Pancreas (tissue), 10 donors: ENCODE measurements at regions of chr7 and their contacts with region 1.

Region 1: GRCh38 chr7:106283831-106284713 is 711 bp downstream of the NAMPT start:
- DNase-seq: peak; percentile 49 to 82 (median 69)
- ATAC-seq: peak; percentile 6 to 42 (median 12)
- H3K4me3 ChIP-seq: peak overlapping the region; percentile 48 to 83 (median 57)
- H3K27ac ChIP-seq: peak overlapping the region; percentile 82 to 98 (median 92)
- H3K4me1 ChIP-seq: peaks cover 0 to 20% (median 8%) of the 10 kb centered on the region in 3 donors
- H3K27me3 ChIP-seq: no peaks in the 10 kb centered on the region
- CTCF ChIP-seq: no peak

Region 2: GRCh38 chr7:105759670-105760550 is 524.2 kb before region 1 on chr7:
- intact Hi-C with region 1: no loop called
- DNase-seq: peak in 2 of 6 donors; percentile 5 to 43
- ATAC-seq: peak in 3 of 4 donors; percentile 76 to 82 (median 82)
- H3K4me3 ChIP-seq: no peak overlapping the region
- H3K27ac ChIP-seq: no peak overlapping the region
- H3K4me1 ChIP-seq: no peaks in the 10 kb centered on the region
- H3K27me3 ChIP-seq: no peaks in the 10 kb centered on the region
- CTCF ChIP-seq: peak in 2 of 4 donors; percentile 24 to 34

Region 3: GRCh38 chr7:106126170-106126938 is 157.7 kb before region 1 on chr7:
- intact Hi-C with region 1: no loop called
- DNase-seq: no peak
- ATAC-seq: no peak
- H3K4me3 ChIP-seq: no peak overlapping the region
- H3K27ac ChIP-seq: no peak overlapping the region
- H3K4me1 ChIP-seq: no peaks in the 10 kb centered on the region
- H3K27me3 ChIP-seq: no peaks in the 10 kb centered on the region
- CTCF ChIP-seq: no peak

Region 4: GRCh38 chr7:106246902-106247711 is 37.0 kb before region 1 on chr7:
- intact Hi-C with region 1: loop called in 1 of 3 experiments (anchors 5 kb)
- DNase-seq: no peak
- ATAC-seq: no peak
- H3K4me3 ChIP-seq: no peak overlapping the region
- H3K27ac ChIP-seq: no peak overlapping the region
- H3K4me1 ChIP-seq: no peaks in the 10 kb centered on the region
- H3K27me3 ChIP-seq: no peaks in the 10 kb centered on the region
- CTCF ChIP-seq: no peak